H1 (cell line): ENCODE measurements at regions of chr7 and their contacts with region 1.

Region 1: DNA sequence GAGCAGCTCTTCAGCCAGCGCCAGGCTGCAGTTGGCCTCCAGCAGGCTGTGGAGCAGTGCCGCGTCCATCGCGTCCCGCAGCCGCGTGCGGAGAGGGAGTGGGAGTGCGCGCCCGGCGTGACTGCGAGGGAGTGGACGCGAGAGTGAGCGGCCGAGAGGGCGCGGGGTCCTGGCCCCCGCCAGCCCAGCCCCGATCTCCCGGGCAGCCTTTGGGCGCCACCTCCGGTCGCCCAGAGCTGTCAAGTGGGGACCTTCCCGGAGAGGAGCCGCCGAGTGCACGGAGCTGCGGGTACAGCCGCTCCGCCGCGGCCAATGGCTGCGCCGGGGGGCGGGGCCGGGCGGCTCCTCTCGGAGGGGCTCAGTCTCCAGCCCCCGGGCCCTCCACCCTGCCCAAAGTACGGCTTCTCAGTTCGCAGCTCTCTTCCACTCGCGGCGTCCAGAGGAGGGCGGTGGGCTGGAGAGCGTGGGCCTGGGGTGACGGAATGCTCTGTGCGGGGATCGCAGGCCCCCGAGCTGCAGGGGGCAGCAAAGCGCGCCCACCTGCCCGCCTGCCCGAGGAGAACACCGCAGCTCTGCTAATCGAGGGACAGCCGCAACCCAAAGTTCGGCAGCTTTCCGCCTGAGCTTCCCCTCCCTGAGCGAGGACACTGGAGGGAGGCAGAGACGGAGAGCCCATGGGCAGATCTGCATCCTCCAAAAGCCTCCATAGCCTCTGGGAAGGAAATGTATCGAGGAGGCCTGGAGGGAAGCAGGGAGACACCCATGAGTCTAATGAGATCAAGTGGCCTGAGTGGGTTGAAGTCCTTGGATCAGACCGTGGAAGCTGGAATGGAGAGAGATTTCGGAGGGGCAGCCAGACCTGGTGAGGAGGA is at the start of gene CRHR2:
- DNase-seq: peak in 1 of 2 experiments; percentile 81
- H3K4me3 ChIP-seq: peak within 1 kb of the TSS; percentile 42 to 67 (median 50)
- H3K27ac ChIP-seq: no peak within 1 kb of the TSS
- H3K4me1 ChIP-seq: peaks cover 6 to 16% (median 7%) of the 10 kb centered on the region in 4 experiments
- H3K27me3 ChIP-seq: peaks cover 10 to 49% (median 41%) of the 10 kb centered on the region in 4 experiments
- CTCF ChIP-seq: peak; percentile 45 to 63 (median 55); a peak in 3 of 4 replicates
- EP300 ChIP-seq: no peak
- POLR2A ChIP-seq: no peak
- RAD21 ChIP-seq: peak; percentile 38 to 50; a peak in 3 of 4 replicates
- total RNA-seq, gene CRHR2: 0.19 and 0.37 TPM in 2 replicates

Region 2: DNA sequence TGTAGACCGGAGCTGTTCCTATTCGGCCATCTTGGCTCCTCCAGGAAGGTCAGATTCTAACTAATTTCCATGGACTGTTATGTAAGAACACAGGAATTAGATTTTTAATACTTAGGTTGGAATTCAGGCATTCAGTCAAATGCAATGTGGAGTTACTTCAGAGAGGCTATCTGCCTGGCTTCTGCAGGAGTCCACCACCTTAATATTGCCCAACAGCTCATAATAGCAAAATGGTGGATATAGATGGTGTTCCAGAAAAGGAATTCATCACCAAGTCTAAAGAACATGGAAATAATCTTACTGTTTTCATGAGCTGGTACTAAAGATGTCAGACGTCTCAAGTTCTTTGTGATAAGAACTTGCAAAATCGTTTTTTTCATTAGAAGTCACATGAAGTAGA is 39.7 kb before region 1 on chr7:
- CTCF ChIA-PET with region 1: interaction called, 10 read pairs
- POLR2A ChIA-PET with region 1: interaction called, 4 read pairs
- DNase-seq: no peak
- H3K4me3 ChIP-seq: peak overlapping the region; percentile 38 to 60 (median 47)
- H3K27ac ChIP-seq: peak overlapping the region; percentile 69
- H3K4me1 ChIP-seq: peaks cover 2 to 5% (median 4%) of the 10 kb centered on the region in 4 experiments; a peak in 4 of 7 replicates
- H3K27me3 ChIP-seq: no peaks in the 10 kb centered on the region
- CTCF ChIP-seq: no peak
- EP300 ChIP-seq: no peak
- POLR2A ChIP-seq: no peak
- RAD21 ChIP-seq: no peak

Region 3: DNA sequence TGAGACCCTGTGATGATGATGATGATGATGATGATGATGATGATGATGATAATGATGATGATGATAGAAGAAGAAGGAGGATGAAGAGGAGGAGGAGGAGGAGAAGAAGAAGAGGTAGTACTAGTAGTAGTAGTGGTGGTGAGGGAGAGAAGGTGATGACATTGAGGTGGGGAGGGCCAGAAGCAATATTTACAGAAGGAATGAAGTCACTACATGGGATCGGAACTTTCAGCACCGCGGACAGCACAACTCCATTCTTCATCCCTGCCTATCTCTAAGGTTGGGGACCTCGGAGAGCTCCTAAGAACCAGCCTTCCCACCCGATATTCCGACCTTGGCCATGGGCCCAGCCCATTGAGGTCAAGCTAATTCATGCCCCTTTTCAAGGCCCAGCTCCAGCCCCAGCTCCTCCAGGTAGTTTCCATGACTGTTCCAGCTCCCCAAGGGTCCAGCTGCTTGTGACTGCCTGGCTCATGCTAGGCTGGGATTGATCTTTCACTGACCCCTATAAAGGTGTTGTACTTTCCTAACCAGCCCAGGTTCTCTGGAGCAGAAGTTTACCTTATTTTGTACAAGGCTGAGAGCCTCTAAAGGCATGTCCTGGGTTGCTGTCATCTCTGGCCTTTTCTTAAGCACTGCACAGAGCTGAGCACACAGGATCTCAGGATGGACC is 10.5 kb before region 1 on chr7:
- CTCF ChIA-PET with region 1: interaction called, 23 read pairs
- POLR2A ChIA-PET with region 1: interaction called, 11 read pairs
- DNase-seq: peak; percentile 25 to 81
- H3K4me3 ChIP-seq: no peak overlapping the region
- H3K27ac ChIP-seq: no peak overlapping the region
- H3K4me1 ChIP-seq: peaks cover 0 to 2% (median under 1%) of the 10 kb centered on the region in 4 experiments; a peak in 2 of 7 replicates
- H3K27me3 ChIP-seq: peaks cover 0 to 5% (median 0%) of the 10 kb centered on the region in 4 experiments; a peak in 2 of 7 replicates
- CTCF ChIP-seq: no peak
- EP300 ChIP-seq: no peak
- POLR2A ChIP-seq: no peak
- RAD21 ChIP-seq: no peak; a peak in 1 of 4 replicates

Region 4: GRCh38 chr7:30702200-30702599 is 19.8 kb after region 1 on chr7:
- CTCF ChIA-PET with region 1: interaction called, 26 read pairs
- POLR2A ChIA-PET with region 1: interaction called, 4 read pairs
- DNase-seq: no peak
- H3K4me3 ChIP-seq: no peak overlapping the region
- H3K27ac ChIP-seq: no peak overlapping the region
- H3K4me1 ChIP-seq: peaks cover 0 to 13% (median 8%) of the 10 kb centered on the region in 4 experiments; a peak in 6 of 7 replicates
- H3K27me3 ChIP-seq: no peaks in the 10 kb centered on the region; a peak in 1 of 7 replicates
- CTCF ChIP-seq: peak; percentile 37 to 54 (median 44)
- EP300 ChIP-seq: no peak
- POLR2A ChIP-seq: no peak
- RAD21 ChIP-seq: peak; percentile 55 to 65

Region 5: GRCh38 chr7:30717181-30717580 is 34.7 kb after region 1 on chr7:
- CTCF ChIA-PET with region 1: interaction called, 15 read pairs
- POLR2A ChIA-PET with region 1: no interaction called
- DNase-seq: no peak
- H3K4me3 ChIP-seq: no peak overlapping the region
- H3K27ac ChIP-seq: no peak overlapping the region
- H3K4me1 ChIP-seq: no peaks in the 10 kb centered on the region; a peak in 1 of 7 replicates
- H3K27me3 ChIP-seq: no peaks in the 10 kb centered on the region
- CTCF ChIP-seq: peak; percentile 31 to 57 (median 55); a peak in 3 of 4 replicates
- EP300 ChIP-seq: no peak
- POLR2A ChIP-seq: no peak
- RAD21 ChIP-seq: peak; percentile 51 to 66

Region 6: DNA sequence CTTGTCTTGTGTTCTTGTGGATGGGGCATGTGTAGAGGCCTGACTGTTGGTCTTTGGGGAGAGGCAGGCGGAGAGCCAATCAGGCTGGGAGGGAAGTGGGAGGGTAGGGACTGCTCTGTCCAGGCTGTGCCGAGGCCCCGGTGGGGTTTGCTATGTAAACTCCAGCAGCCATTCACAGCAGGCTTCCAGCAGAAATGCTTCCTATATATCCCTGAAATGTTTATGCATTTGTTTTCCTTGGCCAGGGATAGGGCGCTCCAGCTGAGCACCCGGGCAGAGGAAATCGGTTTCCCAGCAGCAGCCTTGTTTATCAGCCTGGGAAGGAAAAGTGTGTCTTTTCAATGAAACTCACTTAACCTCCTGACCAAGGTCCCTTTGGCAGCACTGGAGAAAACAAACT is 210.9 kb after region 1 on chr7:
- CTCF ChIA-PET with region 1: no interaction called
- POLR2A ChIA-PET with region 1: no interaction called
- DNase-seq: no peak
- H3K4me3 ChIP-seq: no peak overlapping the region
- H3K27ac ChIP-seq: no peak overlapping the region
- H3K4me1 ChIP-seq: peaks cover 0 to 7% (median 2%) of the 10 kb centered on the region in 4 experiments; a peak in 3 of 7 replicates
- H3K27me3 ChIP-seq: no peaks in the 10 kb centered on the region; a peak in 1 of 7 replicates
- CTCF ChIP-seq: no peak
- EP300 ChIP-seq: no peak
- POLR2A ChIP-seq: no peak
- RAD21 ChIP-seq: no peak